ENCODE measurements at regions of chr21 and their contacts with region 1.

Region 1: DNA sequence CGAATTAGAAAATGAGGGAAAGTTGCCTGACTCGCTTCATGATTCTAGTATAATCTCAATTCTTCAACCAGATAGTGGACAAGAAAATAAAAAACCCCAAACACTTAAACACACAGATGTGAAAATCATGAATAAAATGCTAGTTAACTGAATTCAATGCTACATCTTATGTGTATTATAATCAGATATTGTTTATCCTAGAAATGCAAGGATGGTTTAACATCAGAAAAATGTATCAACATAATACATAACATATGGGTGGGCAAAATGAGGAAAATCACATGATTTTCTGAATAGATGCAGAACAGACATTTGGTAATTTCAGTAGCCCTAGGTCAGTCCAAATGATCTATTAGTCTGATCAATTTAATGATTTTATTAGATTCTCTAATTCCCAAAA is 97.2 kb downstream of the SIM2 start:
- H3K4me3 ChIP-seq: no peak overlapping the region
- H3K27ac ChIP-seq: no peak overlapping the region
- H3K4me1 ChIP-seq: no peaks in the 10 kb centered on the region
- CTCF ChIP-seq: no peak

Region 2: DNA sequence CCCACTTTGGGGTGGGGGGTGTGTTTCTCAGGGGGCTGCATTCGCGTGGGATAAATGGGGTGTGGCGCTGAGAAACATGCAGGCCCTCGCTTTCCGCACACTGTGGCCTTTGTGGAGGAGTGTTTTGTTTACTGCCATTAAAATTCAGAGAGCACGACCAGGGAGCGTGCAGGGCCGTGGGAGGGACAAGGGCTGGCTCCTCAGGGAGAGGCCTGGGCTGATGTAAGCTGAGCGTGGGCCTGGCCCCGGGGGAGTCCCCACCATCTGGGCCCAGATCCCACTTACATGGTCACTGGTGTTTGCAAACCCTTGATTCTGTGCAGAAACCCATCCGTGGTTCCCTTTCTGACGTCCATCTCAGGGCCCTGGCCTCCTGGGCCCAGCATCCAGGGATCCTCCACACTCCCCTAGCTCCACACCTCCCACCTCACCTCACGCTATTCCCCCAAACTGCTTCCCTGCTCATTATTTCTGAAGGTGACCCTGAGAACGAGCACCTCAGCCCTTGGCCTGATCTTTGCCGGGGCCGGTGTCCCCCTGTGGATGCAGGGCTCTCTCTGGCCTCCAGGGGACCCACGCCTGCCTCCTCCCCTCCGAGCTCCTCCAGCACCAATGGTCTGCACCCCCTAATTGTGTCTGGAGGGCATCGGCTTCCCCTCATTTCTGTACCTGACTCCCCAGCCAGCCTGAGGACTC is 189.6 kb before region 1 on chr21:
- CTCF ChIA-PET with region 1: no interaction called
- POLR2A ChIA-PET with region 1: no interaction called
- H3K4me3 ChIP-seq: no peak overlapping the region
- H3K27ac ChIP-seq: no peak overlapping the region
- H3K4me1 ChIP-seq: no peaks in the 10 kb centered on the region
- CTCF ChIP-seq: no peak

Region 3: DNA sequence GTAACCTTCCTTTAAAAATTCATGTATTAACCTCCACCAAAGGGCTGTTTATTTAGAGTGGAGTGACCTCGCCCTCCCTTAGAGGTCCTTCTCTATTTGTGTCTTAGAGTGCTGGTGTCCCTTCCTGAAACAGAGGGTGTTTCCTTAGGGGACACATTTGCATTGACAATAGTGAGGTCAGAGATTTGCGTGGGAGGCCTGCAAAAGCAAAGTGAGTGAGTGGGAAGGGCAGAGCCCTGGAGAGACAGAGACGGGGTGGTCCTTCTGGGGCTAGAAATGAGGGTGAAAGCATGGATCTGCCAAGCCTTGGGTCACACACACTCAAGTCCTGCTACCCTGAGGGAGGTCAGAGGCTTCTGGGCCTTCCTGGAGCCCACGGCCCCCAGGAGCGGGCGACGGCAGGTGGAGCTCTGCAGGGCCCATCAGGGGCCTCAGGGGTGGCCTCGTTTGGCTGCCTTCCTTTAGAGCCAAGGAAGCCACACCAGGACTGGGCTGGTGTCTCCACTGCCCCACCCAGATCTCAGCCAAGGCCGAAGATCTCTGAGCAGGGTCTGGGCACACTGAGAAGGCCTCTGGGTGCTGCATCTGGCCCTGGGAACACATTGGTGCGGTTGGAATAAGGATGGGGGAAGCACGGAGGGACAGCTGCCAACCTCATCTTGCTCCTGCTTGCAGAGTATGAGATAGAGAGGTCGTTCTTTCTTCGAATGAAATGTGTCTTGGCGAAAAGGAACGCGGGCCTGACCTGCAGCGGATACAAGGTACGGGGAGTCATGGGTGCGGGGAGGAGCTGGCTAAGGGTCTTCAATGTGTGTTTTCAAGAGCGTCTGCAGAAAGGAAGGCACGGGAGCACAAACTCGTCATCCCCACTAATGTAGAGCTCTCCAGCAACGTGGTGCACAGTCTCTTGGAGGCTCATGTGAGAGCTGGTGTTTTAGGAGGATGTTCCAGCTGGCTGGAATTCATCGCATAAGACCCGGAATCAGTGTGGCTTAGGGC is 73.4 kb before region 1 on chr21:
- CTCF ChIA-PET with region 1: no interaction called
- POLR2A ChIA-PET with region 1: no interaction called
- H3K4me3 ChIP-seq: no peak overlapping the region
- H3K27ac ChIP-seq: no peak overlapping the region
- H3K4me1 ChIP-seq: no peaks in the 10 kb centered on the region
- CTCF ChIP-seq: no peak

Region 4: GRCh38 chr21:36783612-36784383 is 12.3 kb before region 1 on chr21:
- CTCF ChIA-PET with region 1: interaction called, 10 read pairs
- POLR2A ChIA-PET with region 1: no interaction called
- H3K4me3 ChIP-seq: no peak overlapping the region
- H3K27ac ChIP-seq: no peak overlapping the region
- H3K4me1 ChIP-seq: peaks cover 4% of the 10 kb centered on the region; the same call in 1 of the 2 replicates
- CTCF ChIP-seq: no peak

Measured in HEK293 (cell line).